GM10248 (cell line): ENCODE measurements at regions of chr6 and their contacts with region 1.

Region 1: GRCh38 chr6:32868257-32868788 is 14.3 kb downstream of the PSMB9 start:
- DNase-seq: peak; percentile 52
- CTCF ChIP-seq: peak; percentile 88

Region 2: GRCh38 chr6:32432050-32432450 is 436.3 kb before region 1 on chr6:
- CTCF ChIA-PET with region 1: interaction called, 12 read pairs
- POLR2A ChIA-PET with region 1: no interaction called
- DNase-seq: peak; percentile 29
- CTCF ChIP-seq: peak; percentile 47

Region 3: GRCh38 chr6:32819729-32820128 is 48.6 kb before region 1 on chr6:
- CTCF ChIA-PET with region 1: interaction called, 64 read pairs
- POLR2A ChIA-PET with region 1: no interaction called
- DNase-seq: no peak
- CTCF ChIP-seq: no peak

Region 4: DNA sequence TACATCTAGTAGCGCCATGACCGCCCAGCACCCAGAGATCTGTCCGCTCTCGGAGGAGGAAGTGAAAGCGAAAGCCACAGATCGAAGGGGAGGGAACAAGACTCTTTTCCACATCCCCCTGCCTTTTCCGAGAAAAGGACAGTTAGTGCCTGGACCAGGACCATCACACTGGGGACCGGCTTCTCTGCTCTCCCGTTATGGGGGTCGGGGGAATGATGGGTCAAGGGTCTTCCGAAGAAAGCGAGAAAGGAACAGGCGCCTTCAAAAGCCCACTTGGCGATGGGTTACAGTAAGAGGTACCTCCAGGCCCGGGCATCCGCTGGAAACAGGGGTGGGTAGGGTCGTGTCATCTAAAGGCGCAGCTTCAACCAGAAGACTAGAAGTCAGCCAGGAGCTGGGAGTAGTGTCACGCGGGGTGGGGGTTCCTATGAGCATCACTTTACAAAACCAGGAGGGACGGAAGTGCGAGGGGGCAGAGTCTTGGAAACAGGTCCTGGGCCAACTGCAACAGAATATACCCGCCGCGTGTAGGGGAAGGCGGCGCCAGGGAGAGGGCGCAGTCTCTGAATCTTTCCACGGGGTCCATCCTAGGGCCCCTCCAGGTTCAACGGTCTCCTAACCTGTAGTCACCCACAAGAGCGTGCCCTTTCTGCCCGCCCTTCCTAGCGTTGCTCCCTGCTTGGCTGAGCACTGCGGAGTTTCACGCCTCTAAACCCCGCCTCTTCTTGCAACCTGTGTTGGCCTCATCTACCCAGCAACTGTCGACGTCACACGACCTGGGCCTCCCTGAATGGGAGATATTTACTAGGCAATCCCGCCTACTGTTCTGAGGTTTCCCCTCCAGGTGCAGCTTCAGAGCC is 24.1 kb before region 1 on chr6 and contains the start of gene PSMB8:
- CTCF ChIA-PET with region 1: interaction called, 339 read pairs
- POLR2A ChIA-PET with region 1: interaction called, 6 read pairs
- DNase-seq: peak; percentile 92
- CTCF ChIP-seq: no peak

Region 5: GRCh38 chr6:32885698-32886286 is 17.5 kb after region 1 on chr6:
- CTCF ChIA-PET with region 1: interaction called, 38 read pairs
- POLR2A ChIA-PET with region 1: no interaction called
- DNase-seq: peak; percentile 63
- CTCF ChIP-seq: peak; percentile 50

Region 6: GRCh38 chr6:32933636-32934085 is 65.3 kb after region 1 on chr6:
- CTCF ChIA-PET with region 1: interaction called, 13 read pairs
- POLR2A ChIA-PET with region 1: no interaction called
- DNase-seq: peak; percentile 54
- CTCF ChIP-seq: peak; percentile 81

Region 7: DNA sequence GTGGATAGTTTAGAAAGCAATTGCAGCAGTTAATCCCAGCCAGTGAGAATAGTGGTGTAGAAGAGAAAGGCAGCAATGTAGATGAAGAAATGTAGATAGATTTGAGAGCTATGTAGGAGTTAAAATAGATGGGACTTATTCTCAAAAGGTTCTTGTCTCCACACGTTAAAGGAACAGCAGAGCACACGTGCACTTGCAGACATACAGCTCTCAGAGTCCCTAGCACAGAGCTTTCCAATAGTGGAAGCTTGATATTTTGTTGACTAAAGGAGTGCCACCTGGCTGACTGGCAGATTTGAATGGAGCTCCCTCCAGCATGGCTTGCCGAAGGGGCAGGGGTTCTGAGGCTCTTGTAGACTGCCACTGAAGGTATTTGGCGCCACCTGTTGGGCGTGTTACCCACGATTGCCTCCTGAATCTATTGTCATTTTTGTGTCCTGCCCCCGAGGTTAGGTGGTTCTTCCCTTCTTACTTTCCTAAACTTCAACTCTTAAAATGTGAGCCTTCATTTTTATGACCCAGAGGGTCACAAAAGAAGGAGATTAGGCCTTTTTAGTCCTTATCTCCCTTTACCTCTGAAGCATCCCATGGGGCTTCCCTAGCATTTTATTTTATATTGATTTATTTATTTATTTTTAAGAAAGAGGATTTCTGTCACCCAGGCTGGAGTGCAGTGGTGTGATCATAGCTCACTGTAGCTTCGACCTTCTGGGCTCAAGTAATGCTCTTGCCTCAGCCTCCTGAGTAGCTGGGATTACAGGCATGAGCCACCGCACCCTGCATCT is 116.5 kb after region 1 on chr6:
- CTCF ChIA-PET with region 1: interaction called, 23 read pairs
- POLR2A ChIA-PET with region 1: interaction called, 5 read pairs
- DNase-seq: peak; percentile 75
- CTCF ChIP-seq: peak; percentile 80

Region 8: GRCh38 chr6:33112148-33112547 is 243.8 kb after region 1 on chr6:
- CTCF ChIA-PET with region 1: no interaction called
- POLR2A ChIA-PET with region 1: no interaction called
- DNase-seq: peak; percentile 83
- CTCF ChIP-seq: no peak